ENCODE measurements at regions of chr15 and their contacts with region 1.

Region 1: GRCh38 chr15:77821188-77821958 is 188.7 kb upstream of the LINGO1 start:
- DNase-seq: peak; percentile 41 to 87
- H3K4me3 ChIP-seq: no peak overlapping the region
- H3K27ac ChIP-seq: no peak overlapping the region
- H3K4me1 ChIP-seq: peaks cover 0 to 18% (median 11%) of the 10 kb centered on the region in 4 experiments; a peak in 6 of 7 replicates
- H3K27me3 ChIP-seq: peaks cover 23 to 42% (median 39%) of the 10 kb centered on the region in 4 experiments
- CTCF ChIP-seq: peak; percentile 94 to 98 (median 95)
- EP300 ChIP-seq: no peak
- POLR2A ChIP-seq: no peak
- RAD21 ChIP-seq: peak; percentile 92 to 96

Region 2: DNA sequence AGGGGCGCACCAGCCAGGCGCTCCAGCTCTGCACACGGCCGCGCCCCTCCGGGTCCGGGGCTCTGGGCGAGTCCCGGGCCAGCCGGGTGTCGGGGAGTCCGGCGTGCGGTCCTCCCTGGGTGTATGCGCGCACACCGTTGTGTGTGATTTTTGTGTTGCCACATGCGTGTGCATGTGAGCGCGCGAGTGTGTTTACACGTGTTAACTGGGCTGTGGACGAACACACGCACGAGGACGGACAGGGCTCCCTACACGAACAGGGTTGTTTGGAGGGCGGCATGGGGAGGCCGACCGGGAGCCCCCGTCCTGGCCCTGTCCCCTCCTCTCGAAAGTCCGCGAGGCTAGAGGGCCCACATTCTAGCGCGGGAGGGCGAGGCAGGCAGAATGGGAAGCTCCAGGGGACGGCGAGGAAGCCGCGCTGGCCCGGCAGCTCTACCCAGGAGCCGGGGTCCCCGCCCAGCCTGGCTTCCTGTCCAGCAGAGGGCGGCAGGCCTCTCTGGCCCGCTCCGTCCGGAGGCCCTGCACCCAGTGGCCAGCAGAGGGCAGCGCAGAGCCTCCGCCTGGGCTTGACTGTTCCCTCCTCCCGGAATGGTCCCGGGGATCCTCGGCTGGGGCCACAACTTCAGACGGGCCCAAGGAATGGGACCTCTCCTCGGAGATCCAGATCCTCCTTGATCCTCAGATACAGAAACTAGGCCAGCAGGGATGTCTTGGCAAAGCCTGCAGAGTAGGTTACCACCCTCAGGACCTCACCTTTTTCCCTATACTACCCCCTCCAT is 188.1 kb before region 1 on chr15:
- CTCF ChIA-PET with region 1: interaction called, 70 read pairs
- POLR2A ChIA-PET with region 1: interaction called, 21 read pairs
- DNase-seq: peak; percentile 87 to 99
- H3K4me3 ChIP-seq: peak overlapping the region; percentile 58 to 68 (median 67)
- H3K27ac ChIP-seq: peak overlapping the region; percentile 84
- H3K4me1 ChIP-seq: peaks cover 22 to 48% (median 33%) of the 10 kb centered on the region in 4 experiments
- H3K27me3 ChIP-seq: no peaks in the 10 kb centered on the region; a peak in 1 of 7 replicates
- CTCF ChIP-seq: peak in 2 of 3 experiments; percentile 100; a peak in 3 of 4 replicates
- EP300 ChIP-seq: no peak
- POLR2A ChIP-seq: peak in 1 of 2 experiments; percentile 68; a peak in 2 of 3 replicates
- RAD21 ChIP-seq: peak; percentile 83 to 89

Region 3: GRCh38 chr15:77671363-77671986 is 149.9 kb before region 1 on chr15:
- CTCF ChIA-PET with region 1: interaction called, 13 read pairs
- POLR2A ChIA-PET with region 1: no interaction called
- DNase-seq: no peak
- H3K4me3 ChIP-seq: no peak overlapping the region
- H3K27ac ChIP-seq: no peak overlapping the region
- H3K4me1 ChIP-seq: no peaks in the 10 kb centered on the region; a peak in 2 of 7 replicates
- H3K27me3 ChIP-seq: no peaks in the 10 kb centered on the region
- CTCF ChIP-seq: no peak
- EP300 ChIP-seq: no peak
- POLR2A ChIP-seq: no peak
- RAD21 ChIP-seq: no peak

Region 4: DNA sequence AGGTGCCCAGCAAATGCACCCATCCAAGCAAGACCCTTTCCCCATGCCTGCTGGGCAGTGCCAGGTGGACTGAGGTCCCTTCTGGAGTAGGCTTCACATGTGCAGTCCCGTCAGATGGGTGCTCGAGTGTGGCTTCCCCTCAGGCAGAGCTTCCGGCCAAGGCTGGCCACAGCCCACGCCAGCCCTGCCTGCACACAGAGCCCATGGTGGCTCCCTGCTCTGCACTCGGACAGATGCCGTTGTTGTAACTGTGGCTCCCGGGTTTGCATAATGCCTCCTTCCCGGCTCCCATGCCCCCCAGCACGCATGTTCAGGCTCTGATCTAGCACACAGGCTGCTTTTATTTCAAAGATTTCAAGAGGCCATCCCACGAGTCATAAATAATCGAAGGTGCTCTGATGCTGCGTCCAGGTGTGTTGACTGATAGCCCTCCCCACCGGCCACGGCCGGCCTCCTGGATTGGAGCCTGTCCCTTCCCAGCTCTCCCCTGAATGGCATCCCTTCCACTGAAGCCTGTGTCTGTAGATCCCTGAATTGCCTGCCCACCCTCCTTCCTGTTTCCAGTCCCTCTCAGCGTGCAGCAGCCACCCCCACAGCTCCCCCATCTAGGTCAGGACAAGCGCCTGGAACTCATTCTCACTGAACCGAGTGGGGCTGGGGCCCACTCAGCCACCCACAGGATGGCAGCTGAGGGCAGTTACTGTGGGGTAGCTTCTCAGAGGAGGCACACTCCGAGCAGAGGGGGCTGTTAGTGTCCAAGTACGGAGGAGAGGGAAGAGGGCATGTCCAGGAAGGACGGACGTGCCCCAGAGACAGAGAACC is 88.6 kb before region 1 on chr15:
- CTCF ChIA-PET with region 1: interaction called, 19 read pairs
- POLR2A ChIA-PET with region 1: interaction called, 3 read pairs
- DNase-seq: no peak
- H3K4me3 ChIP-seq: no peak overlapping the region
- H3K27ac ChIP-seq: no peak overlapping the region
- H3K4me1 ChIP-seq: peaks cover 0 to 12% (median 2%) of the 10 kb centered on the region in 4 experiments; a peak in 4 of 7 replicates
- H3K27me3 ChIP-seq: no peaks in the 10 kb centered on the region
- CTCF ChIP-seq: no peak
- EP300 ChIP-seq: no peak
- POLR2A ChIP-seq: no peak
- RAD21 ChIP-seq: no peak

Region 5: GRCh38 chr15:77759896-77760592 is 61.3 kb before region 1 on chr15:
- CTCF ChIA-PET with region 1: interaction called, 21 read pairs
- POLR2A ChIA-PET with region 1: no interaction called
- DNase-seq: no peak
- H3K4me3 ChIP-seq: no peak overlapping the region
- H3K27ac ChIP-seq: no peak overlapping the region
- H3K4me1 ChIP-seq: peaks cover 0 to 5% (median 5%) of the 10 kb centered on the region in 4 experiments; a peak in 6 of 7 replicates
- H3K27me3 ChIP-seq: no peaks in the 10 kb centered on the region
- CTCF ChIP-seq: no peak
- EP300 ChIP-seq: no peak
- POLR2A ChIP-seq: no peak
- RAD21 ChIP-seq: no peak

Region 6: DNA sequence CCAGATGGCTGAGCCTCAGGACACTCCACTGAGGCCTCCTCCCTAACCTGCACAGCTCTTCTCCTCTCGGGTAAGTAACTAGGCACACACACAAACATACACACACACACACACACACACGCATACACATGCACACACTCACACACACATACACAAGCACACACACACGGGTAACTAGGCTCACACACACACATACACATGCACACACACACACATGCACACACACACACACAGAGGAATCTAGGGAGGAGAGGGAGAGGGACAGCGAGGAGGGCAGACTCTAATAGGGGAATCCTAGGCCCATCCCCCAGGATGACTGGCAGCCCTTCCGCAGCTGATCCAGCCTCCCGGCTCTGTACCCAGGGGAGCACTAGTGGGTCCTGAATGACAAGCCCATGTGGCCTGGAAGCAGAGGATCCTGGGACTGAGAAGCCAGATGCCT is 11.2 kb before region 1 on chr15:
- CTCF ChIA-PET with region 1: interaction called, 19 read pairs
- POLR2A ChIA-PET with region 1: interaction called, 3 read pairs
- DNase-seq: no peak
- H3K4me3 ChIP-seq: no peak overlapping the region
- H3K27ac ChIP-seq: no peak overlapping the region
- H3K4me1 ChIP-seq: peaks cover 0 to 20% (median 8%) of the 10 kb centered on the region in 4 experiments; a peak in 5 of 7 replicates
- H3K27me3 ChIP-seq: no peaks in the 10 kb centered on the region
- CTCF ChIP-seq: no peak
- EP300 ChIP-seq: no peak
- POLR2A ChIP-seq: no peak
- RAD21 ChIP-seq: no peak

Region 7: DNA sequence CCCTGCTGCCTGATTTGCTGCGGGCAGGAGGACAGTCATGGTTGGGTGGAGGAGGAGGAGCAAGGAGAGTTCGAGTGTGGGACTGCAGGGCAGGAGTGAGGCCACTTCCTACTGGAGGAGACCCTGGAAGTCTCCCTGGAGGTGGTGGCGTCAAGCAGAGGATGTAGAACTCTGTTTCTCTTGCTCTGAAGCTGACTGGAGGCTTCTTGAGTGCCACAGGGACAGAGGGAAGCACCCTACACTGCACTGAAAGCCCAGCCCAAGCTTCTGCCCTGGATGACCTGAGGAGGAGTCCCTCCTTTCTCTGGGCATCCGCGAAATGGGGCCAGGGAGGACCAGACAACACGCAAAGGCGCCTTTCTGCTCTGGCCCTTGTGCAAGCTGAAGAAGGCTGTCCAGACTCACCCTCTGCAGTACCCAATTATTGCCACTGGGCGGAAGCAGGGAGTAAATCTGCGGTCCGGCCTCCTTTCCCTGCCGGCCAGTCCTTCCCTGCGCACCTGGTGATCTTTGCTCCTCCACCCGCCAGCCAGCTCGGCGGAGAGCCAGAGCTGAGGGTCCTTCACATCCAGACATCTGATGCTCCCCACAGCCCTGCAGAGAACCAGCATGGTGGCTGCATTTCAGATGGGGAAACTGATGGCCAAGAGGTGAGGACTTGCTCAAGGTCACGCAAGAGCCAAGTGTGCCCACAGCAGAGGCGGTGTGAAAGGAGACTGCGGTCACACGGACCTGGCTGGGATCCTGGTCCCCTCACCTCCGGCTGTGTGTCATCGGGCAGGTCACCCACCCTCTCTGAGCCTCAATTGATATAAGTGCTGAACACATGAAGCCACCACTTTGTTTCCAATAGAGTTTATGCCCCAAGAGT is 49.1 kb after region 1 on chr15:
- CTCF ChIA-PET with region 1: interaction called, 12 read pairs
- POLR2A ChIA-PET with region 1: no interaction called
- DNase-seq: peak; percentile 39 to 95
- H3K4me3 ChIP-seq: no peak overlapping the region; a peak in 1 of 8 replicates
- H3K27ac ChIP-seq: no peak overlapping the region
- H3K4me1 ChIP-seq: no peaks in the 10 kb centered on the region
- H3K27me3 ChIP-seq: 0 out of 7 replicates have a peak, but pooled peaks cover 0 to 2% (median 0%) of the 10 kb centered on the region in 4 experiments
- CTCF ChIP-seq: peak; percentile 78 to 93 (median 90)
- EP300 ChIP-seq: no peak
- POLR2A ChIP-seq: no peak
- RAD21 ChIP-seq: peak; percentile 57 to 64

Measured in H1 (cell line).